ENCODE measurements at regions of chr6 and their contacts with region 1.

Region 1: GRCh38 chr6:39361657-39362486 is 39.4 kb upstream of the KCNK16 start:
- DNase-seq: peak; percentile 69 to 70
- H3K4me3 ChIP-seq: no peak overlapping the region
- H3K27ac ChIP-seq: no peak overlapping the region
- H3K4me1 ChIP-seq: peaks cover 0 to 13% of the 10 kb centered on the region in 2 donors
- H3K27me3 ChIP-seq: no peaks in the 10 kb centered on the region
- CTCF ChIP-seq: peak; percentile 44 to 90 (median 75)
- POLR2A ChIP-seq: no peak

Region 2: GRCh38 chr6:39765508-39766065 is 403.7 kb after region 1 on chr6:
- intact Hi-C with region 1: no loop called
- DNase-seq: no peak
- H3K4me3 ChIP-seq: no peak overlapping the region
- H3K27ac ChIP-seq: no peak overlapping the region
- H3K4me1 ChIP-seq: no peaks in the 10 kb centered on the region
- H3K27me3 ChIP-seq: no peaks in the 10 kb centered on the region
- CTCF ChIP-seq: no peak
- POLR2A ChIP-seq: no peak

Region 3: DNA sequence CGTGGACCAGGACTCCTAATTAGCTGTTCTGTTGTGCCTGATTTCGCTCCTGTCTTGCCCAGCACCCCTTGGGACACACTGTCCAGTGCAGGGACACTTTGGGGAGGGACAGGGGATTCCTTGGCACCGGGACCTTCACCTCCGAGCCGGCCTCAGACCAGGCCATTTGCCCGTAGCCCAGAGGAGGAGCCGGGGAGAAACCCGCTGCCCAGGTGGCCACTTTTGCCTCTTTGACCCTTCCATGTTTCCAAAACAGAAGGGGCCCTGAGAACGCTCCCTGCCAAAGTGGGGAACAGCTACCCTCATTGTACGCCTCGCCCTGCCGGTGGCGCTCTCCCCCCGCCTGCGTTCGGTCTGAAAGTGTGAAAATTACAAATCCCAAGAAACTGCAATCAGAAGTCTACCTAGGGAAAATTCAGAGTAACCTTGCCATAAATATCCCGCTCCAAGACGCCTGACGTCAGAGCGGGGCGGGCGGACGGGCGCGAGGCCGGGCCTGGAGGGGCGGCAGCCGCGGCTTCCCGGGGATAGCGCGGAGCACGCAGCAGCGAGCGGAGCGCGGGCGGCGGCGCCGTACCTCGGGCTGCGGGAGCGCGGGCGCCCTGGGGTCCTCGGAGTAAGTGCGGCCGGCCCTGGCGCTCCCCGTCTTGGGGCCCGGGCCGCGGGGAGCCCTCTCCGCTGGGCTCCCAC is 430.1 kb after region 1 on chr6 and contains the start of gene DAAM2:
- intact Hi-C with region 1: loop called (anchors 10 kb)
- DNase-seq: peak; percentile 59 to 74
- H3K4me3 ChIP-seq: peak within 1 kb of the TSS; percentile 40 to 87 (median 62)
- H3K27ac ChIP-seq: peak within 1 kb of the TSS; percentile 54 to 84 (median 77)
- H3K4me1 ChIP-seq: peaks cover 20 to 35% of the 10 kb centered on the region in 2 donors
- H3K27me3 ChIP-seq: no peaks in the 10 kb centered on the region
- CTCF ChIP-seq: peak in 1 of 6 experiments; percentile 16
- POLR2A ChIP-seq: peak in 1 of 2 donors; percentile 74
- total RNA-seq, gene DAAM2: 17.8 to 37.0 (median 23.8) TPM